Psoas muscle (tissue), 8 donors: ENCODE measurements at regions of chr9 and their contacts with region 1.

Region 1: DNA sequence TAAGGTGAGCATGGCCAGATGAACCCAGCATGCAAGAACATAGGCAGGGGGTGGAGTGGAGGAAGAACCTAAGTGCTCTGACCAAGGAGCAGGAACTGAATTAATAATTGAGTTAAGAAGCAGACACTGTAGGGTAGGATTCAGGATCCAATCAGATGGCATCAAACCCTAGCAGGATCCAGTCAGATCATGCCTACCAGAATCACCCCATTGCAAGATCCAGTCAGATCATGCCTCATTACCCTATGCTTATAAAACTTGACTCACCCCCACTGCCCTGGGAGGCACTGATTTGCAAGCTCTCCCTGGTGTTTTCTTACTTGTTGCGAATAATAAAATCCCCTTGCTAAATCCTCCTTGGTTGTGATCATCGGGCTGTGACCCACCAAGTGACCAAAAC is 19.7 kb downstream of the TUSC1 start:
- DNase-seq: no peak
- ATAC-seq: no peak
- H3K4me3 ChIP-seq: no peak overlapping the region
- H3K27ac ChIP-seq: no peak overlapping the region
- H3K4me1 ChIP-seq: no peaks in the 10 kb centered on the region
- H3K27me3 ChIP-seq: no peaks in the 10 kb centered on the region
- CTCF ChIP-seq: no peak

Region 2: GRCh38 chr9:25703701-25704357 is 45.3 kb after region 1 on chr9:
- intact Hi-C with region 1: loop called in 1 of 2 experiments (anchors 10 kb)
- DNase-seq: no peak
- ATAC-seq: no peak
- H3K4me3 ChIP-seq: no peak overlapping the region
- H3K27ac ChIP-seq: no peak overlapping the region
- H3K4me1 ChIP-seq: no peaks in the 10 kb centered on the region
- H3K27me3 ChIP-seq: no peaks in the 10 kb centered on the region
- CTCF ChIP-seq: no peak